ENCODE measurements at regions of chr1 and their contacts with region 1.

Region 1: GRCh38 chr1:108559215-108560186 is at the start of gene EEIG2:
- DNase-seq: peak; percentile 91 to 95 (median 94)
- H3K4me3 ChIP-seq: peak within 1 kb of the TSS; percentile 79 to 91 (median 86)
- H3K27ac ChIP-seq: peak within 1 kb of the TSS; percentile 8 to 75
- H3K4me1 ChIP-seq: peaks cover 14 to 38% (median 29%) of the 10 kb centered on the region in 4 experiments
- H3K27me3 ChIP-seq: no peaks in the 10 kb centered on the region

Region 2: GRCh38 chr1:108521990-108522393 is 37.5 kb before region 1 on chr1:
- CTCF ChIA-PET with region 1: interaction called, 26 read pairs
- POLR2A ChIA-PET with region 1: no interaction called
- DNase-seq: no peak
- H3K4me3 ChIP-seq: no peak overlapping the region
- H3K27ac ChIP-seq: no peak overlapping the region
- H3K4me1 ChIP-seq: no peaks in the 10 kb centered on the region
- H3K27me3 ChIP-seq: no peaks in the 10 kb centered on the region

Region 3: GRCh38 chr1:108570128-108570527 is 10.6 kb after region 1 on chr1:
- CTCF ChIA-PET with region 1: interaction called, 15 read pairs
- POLR2A ChIA-PET with region 1: interaction called, 6 read pairs
- DNase-seq: peak in 2 of 3 donors; percentile 76 to 81
- H3K4me3 ChIP-seq: no peak overlapping the region
- H3K27ac ChIP-seq: no peak overlapping the region
- H3K4me1 ChIP-seq: peaks cover 3 to 20% (median 7%) of the 10 kb centered on the region in 4 experiments
- H3K27me3 ChIP-seq: no peaks in the 10 kb centered on the region

Region 4: GRCh38 chr1:108590957-108591356 is 31.5 kb after region 1 on chr1:
- CTCF ChIA-PET with region 1: interaction called, 16 read pairs
- POLR2A ChIA-PET with region 1: interaction called, 4 read pairs
- DNase-seq: peak; percentile 93 to 98 (median 96)
- H3K4me3 ChIP-seq: peak overlapping the region in 2 of 7 experiments; percentile 13 to 58
- H3K27ac ChIP-seq: peak overlapping the region; percentile 93 to 94
- H3K4me1 ChIP-seq: peaks cover 25 to 52% (median 34%) of the 10 kb centered on the region in 4 experiments
- H3K27me3 ChIP-seq: no peaks in the 10 kb centered on the region

Region 5: DNA sequence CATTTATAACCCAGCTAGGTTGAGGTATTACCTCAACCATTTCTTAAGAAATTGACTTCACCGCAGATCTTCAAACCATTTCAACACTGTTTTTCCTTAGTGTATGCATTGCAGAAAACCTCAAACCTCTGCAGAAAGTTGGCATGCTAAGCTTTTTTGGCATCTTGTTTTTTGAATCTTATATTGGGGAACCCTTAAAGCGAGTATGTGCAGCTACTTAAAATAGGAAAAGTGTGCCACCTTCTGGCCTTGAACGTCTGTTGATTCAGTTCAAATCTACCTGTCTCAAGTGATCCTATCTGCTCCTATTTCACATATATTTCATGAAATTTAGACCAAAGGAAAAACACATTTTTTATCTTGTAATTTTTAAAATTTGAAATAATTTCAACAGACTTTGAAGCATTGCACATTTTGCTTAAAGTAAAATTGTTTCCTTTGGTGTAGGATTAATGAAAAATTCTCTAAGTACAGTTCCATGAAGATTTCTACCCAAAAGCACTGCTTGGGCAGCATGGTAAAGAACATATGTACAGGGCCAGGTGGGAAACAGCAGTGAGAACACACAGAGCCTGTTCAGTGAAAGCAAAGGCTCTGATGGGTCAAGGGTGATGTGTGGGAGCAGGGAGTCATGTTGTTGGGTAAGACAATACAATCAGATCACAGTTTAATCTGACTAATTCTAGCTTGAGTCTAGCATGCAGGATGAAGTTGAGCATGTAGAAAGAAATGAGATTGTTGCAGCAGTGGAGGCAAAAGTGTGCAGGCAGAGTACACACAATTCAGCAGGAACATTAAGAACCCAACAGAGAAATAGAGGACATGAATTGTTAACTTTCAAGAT is 84.2 kb after region 1 on chr1:
- CTCF ChIA-PET with region 1: interaction called, 39 read pairs
- POLR2A ChIA-PET with region 1: interaction called, 6 read pairs
- DNase-seq: peak; percentile 81 to 90 (median 89)
- H3K4me3 ChIP-seq: no peak overlapping the region
- H3K27ac ChIP-seq: no peak overlapping the region
- H3K4me1 ChIP-seq: peaks cover 31 to 54% (median 45%) of the 10 kb centered on the region in 4 experiments
- H3K27me3 ChIP-seq: no peaks in the 10 kb centered on the region